CD8-positive, alpha-beta memory T cell (primary cell): ENCODE measurements at regions of chr12 and their contacts with region 1.

Region 1: GRCh38 chr12:6927379-6928024 is at the start of gene ATN1:
- DNase-seq: peak; percentile 27 to 68 (median 38)
- H3K4me3 ChIP-seq: peak within 1 kb of the TSS; percentile 59
- H3K4me3 Mint-ChIP-seq: peak within 1 kb of the TSS; percentile 82 to 97 (median 92)
- H3K27ac ChIP-seq: peak within 1 kb of the TSS; percentile 65
- H3K27ac Mint-ChIP-seq: peak within 1 kb of the TSS; percentile 68 to 99 (median 93)
- H3K4me1 ChIP-seq: peaks cover 48% of the 10 kb centered on the region
- H3K4me1 Mint-ChIP-seq: peaks cover 32 to 57% (median 46%) of the 10 kb centered on the region in 3 donors
- H3K27me3 ChIP-seq: no peaks in the 10 kb centered on the region
- H3K27me3 Mint-ChIP-seq: no peaks in the 10 kb centered on the region
- total RNA-seq, gene ATN1: 54.8 to 60.4 TPM

Region 2: DNA sequence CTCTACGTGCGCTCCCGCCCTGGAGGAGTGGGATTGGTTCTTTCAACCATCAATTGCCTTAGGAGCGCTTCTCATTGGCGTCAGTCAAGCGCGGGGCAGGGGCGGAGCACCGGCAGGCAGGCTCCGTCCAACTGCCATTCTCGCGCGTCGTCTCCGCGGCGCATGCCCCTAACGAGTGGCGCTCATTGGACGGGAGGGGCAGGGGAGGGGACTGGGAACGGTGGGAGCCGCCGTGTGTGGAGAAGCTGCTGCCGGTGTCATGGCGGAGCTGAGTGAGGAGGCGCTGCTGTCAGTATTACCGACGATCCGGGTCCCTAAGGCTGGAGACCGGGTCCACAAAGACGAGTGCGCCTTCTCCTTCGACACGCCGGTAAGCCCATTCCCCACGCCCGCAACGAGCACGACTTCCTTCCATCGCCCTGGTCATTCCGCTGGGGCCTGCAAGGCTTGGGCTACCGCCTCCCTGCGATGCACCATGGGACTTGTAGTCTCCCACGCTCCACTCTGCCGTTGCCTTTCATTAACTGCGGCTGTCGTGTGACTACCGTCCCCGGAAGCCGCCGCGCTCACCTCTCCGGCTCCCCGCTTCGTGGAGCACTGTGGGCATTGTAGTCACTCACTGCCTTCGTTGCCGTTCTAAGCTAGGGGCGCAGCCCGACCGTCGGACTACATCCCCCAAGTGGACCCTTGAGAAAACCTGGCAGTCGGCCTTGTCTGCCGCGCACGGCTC is 75.4 kb before region 1 on chr12 and contains the start of gene USP5:
- CTCF ChIA-PET with region 1: no interaction called
- POLR2A ChIA-PET with region 1: no interaction called
- DNase-seq: peak; percentile 97 to 99 (median 99)
- H3K4me3 ChIP-seq: peak within 1 kb of the TSS; percentile 97
- H3K4me3 Mint-ChIP-seq: peak within 1 kb of the TSS; percentile 86 to 99 (median 94)
- H3K27ac ChIP-seq: peak within 1 kb of the TSS; percentile 77
- H3K27ac Mint-ChIP-seq: peak within 1 kb of the TSS; percentile 99 to 100 (median 100)
- H3K4me1 ChIP-seq: peaks cover 18% of the 10 kb centered on the region
- H3K4me1 Mint-ChIP-seq: peaks cover 20 to 38% (median 20%) of the 10 kb centered on the region in 3 donors
- H3K27me3 ChIP-seq: no peaks in the 10 kb centered on the region
- H3K27me3 Mint-ChIP-seq: no peaks in the 10 kb centered on the region
- total RNA-seq, gene USP5: 154 TPM

Region 3: GRCh38 chr12:6899427-6899826 is 28.1 kb before region 1 on chr12:
- CTCF ChIA-PET with region 1: no interaction called
- POLR2A ChIA-PET with region 1: no interaction called
- DNase-seq: no peak
- H3K4me3 ChIP-seq: no peak overlapping the region
- H3K4me3 Mint-ChIP-seq: no peak overlapping the region
- H3K27ac ChIP-seq: no peak overlapping the region
- H3K27ac Mint-ChIP-seq: peak overlapping the region in 1 of 8 donors; percentile 35
- H3K4me1 ChIP-seq: peaks cover 8% of the 10 kb centered on the region
- H3K4me1 Mint-ChIP-seq: peaks cover 0 to 5% (median 0%) of the 10 kb centered on the region in 3 donors
- H3K27me3 ChIP-seq: no peaks in the 10 kb centered on the region
- H3K27me3 Mint-ChIP-seq: peaks cover 0 to 4% of the 10 kb centered on the region in 2 donors

Region 4: GRCh38 chr12:6914246-6914946 is 13.1 kb before region 1 on chr12 and contains the start of gene ENO2:
- CTCF ChIA-PET with region 1: interaction called, 28 read pairs
- POLR2A ChIA-PET with region 1: interaction called, 7 read pairs
- DNase-seq: peak; percentile 79 to 94 (median 87)
- H3K4me3 ChIP-seq: peak within 1 kb of the TSS; percentile 69
- H3K4me3 Mint-ChIP-seq: peak within 1 kb of the TSS; percentile 89 to 99 (median 94)
- H3K27ac ChIP-seq: peak within 1 kb of the TSS; percentile 66
- H3K27ac Mint-ChIP-seq: peak within 1 kb of the TSS; percentile 94 to 99 (median 96)
- H3K4me1 ChIP-seq: peaks cover 21% of the 10 kb centered on the region
- H3K4me1 Mint-ChIP-seq: peaks cover 21 to 44% (median 30%) of the 10 kb centered on the region in 3 donors
- H3K27me3 ChIP-seq: no peaks in the 10 kb centered on the region
- H3K27me3 Mint-ChIP-seq: no peaks in the 10 kb centered on the region
- total RNA-seq, gene ENO2: 125 to 131 TPM

Region 5: GRCh38 chr12:6965026-6965661 is 37.6 kb after region 1 on chr12:
- CTCF ChIA-PET with region 1: interaction called, 815 read pairs
- POLR2A ChIA-PET with region 1: interaction called, 7 read pairs
- DNase-seq: peak; percentile 79 to 90 (median 84)
- H3K4me3 ChIP-seq: no peak overlapping the region
- H3K4me3 Mint-ChIP-seq: peak overlapping the region in 2 of 7 donors; percentile 38 to 84
- H3K27ac ChIP-seq: no peak overlapping the region
- H3K27ac Mint-ChIP-seq: peak overlapping the region; percentile 85 to 98 (median 90)
- H3K4me1 ChIP-seq: peaks cover 59% of the 10 kb centered on the region
- H3K4me1 Mint-ChIP-seq: peaks cover 43 to 60% (median 59%) of the 10 kb centered on the region in 3 donors
- H3K27me3 ChIP-seq: no peaks in the 10 kb centered on the region
- H3K27me3 Mint-ChIP-seq: no peaks in the 10 kb centered on the region

Region 6: DNA sequence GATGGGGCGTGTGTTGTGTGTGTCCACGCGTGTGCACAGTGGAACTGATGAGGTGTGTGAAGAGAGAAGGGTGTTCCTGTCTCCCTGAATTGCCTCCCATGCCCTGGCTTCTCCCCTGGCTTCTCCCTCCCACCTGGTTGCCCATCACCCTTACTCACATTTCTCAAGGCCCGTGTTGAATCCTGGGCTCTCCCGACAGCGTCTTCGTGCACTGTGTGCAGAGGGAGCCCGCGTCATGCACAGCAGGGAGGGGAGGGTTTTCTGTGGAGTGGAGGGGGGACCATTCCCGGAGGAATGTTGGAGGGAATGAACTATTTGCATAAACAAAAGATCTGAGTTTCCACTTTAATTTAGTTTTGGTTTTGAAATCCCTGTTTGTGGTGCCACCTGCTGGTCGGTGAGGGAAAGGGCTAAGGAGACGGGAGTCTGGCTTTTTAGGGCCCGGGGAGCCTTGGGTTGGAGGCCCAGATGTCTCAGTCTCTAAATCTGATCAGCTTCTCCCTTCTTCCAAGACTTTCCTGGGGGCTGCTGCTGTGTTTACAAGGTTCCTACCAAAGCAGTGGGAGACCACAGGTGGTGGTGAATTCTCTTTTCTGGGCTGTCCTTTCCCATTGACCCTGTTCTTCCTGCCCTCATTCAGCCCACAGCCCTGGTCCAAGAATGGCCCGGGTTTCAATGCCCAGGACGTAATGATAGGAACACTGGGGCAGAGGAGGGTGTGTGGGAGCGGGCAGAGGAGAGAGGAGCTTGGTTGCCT is 164.9 kb after region 1 on chr12 and contains the start of gene C1R:
- CTCF ChIA-PET with region 1: interaction called, 19 read pairs
- POLR2A ChIA-PET with region 1: no interaction called
- DNase-seq: peak; percentile 54 to 77 (median 61)
- H3K4me3 ChIP-seq: peak within 1 kb of the TSS; percentile 61
- H3K4me3 Mint-ChIP-seq: peak within 1 kb of the TSS; percentile 70 to 94 (median 86)
- H3K27ac ChIP-seq: no peak within 1 kb of the TSS
- H3K27ac Mint-ChIP-seq: peak within 1 kb of the TSS; percentile 50 to 94 (median 64)
- H3K4me1 ChIP-seq: peaks cover 12% of the 10 kb centered on the region
- H3K4me1 Mint-ChIP-seq: peaks cover 6 to 11% (median 9%) of the 10 kb centered on the region in 3 donors
- H3K27me3 ChIP-seq: no peaks in the 10 kb centered on the region
- H3K27me3 Mint-ChIP-seq: peaks cover 2 to 6% of the 10 kb centered on the region in 2 donors
- total RNA-seq, gene C1R: 1.2 to 1.7 TPM

Region 7: GRCh38 chr12:7108796-7109571 is 181.5 kb after region 1 on chr12 and contains the start of gene C1RL:
- CTCF ChIA-PET with region 1: interaction called, 69 read pairs
- POLR2A ChIA-PET with region 1: interaction called, 3 read pairs
- DNase-seq: peak; percentile 62 to 83 (median 76)
- H3K4me3 ChIP-seq: peak within 1 kb of the TSS; percentile 96
- H3K4me3 Mint-ChIP-seq: peak within 1 kb of the TSS; percentile 93 to 99 (median 95)
- H3K27ac ChIP-seq: peak within 1 kb of the TSS; percentile 75
- H3K27ac Mint-ChIP-seq: peak within 1 kb of the TSS; percentile 86 to 97 (median 94)
- H3K4me1 ChIP-seq: peaks cover 25% of the 10 kb centered on the region
- H3K4me1 Mint-ChIP-seq: peaks cover 46 to 57% (median 52%) of the 10 kb centered on the region in 3 donors
- H3K27me3 ChIP-seq: no peaks in the 10 kb centered on the region
- H3K27me3 Mint-ChIP-seq: peaks cover 0 to 2% of the 10 kb centered on the region in 2 donors
- total RNA-seq, gene C1RL: 12.7 to 14.2 TPM